ENCODE measurements at regions of chr10 and their contacts with region 1.

Region 1: GRCh38 chr10:28334296-28334695 is 31.4 kb upstream of the MPP7 start:
- DNase-seq: peak in 8 of 9 experiments; percentile 14 to 98 (median 50)
- ATAC-seq: peak; percentile 61
- H3K4me3 ChIP-seq: peak overlapping the region; percentile 60 to 67
- H3K4me3 Mint-ChIP-seq: peak overlapping the region; percentile 95
- H3K27ac ChIP-seq: peak overlapping the region; percentile 96 to 98
- H3K27ac Mint-ChIP-seq: peak overlapping the region; percentile 100
- H3K4me1 ChIP-seq: peaks cover 64% of the 10 kb centered on the region
- H3K4me1 Mint-ChIP-seq: peaks cover 74% of the 10 kb centered on the region
- H3K27me3 ChIP-seq: no peaks in the 10 kb centered on the region
- H3K27me3 Mint-ChIP-seq: no peaks in the 10 kb centered on the region
- CTCF ChIP-seq: no peak

Region 2: GRCh38 chr10:26486991-26487850 is 1847.1 kb before region 1 on chr10:
- CTCF ChIA-PET with region 1: no interaction called
- POLR2A ChIA-PET with region 1: no interaction called
- intact Hi-C with region 1: loop called (anchors 5 to 10 kb)
- DNase-seq: peak; percentile 16 to 92 (median 69)
- ATAC-seq: peak; percentile 75
- H3K4me3 ChIP-seq: peak overlapping the region in 1 of 2 experiments; percentile 2
- H3K4me3 Mint-ChIP-seq: peak overlapping the region; percentile 66
- H3K27ac ChIP-seq: peak overlapping the region; percentile 73 to 91
- H3K27ac Mint-ChIP-seq: peak overlapping the region; percentile 97
- H3K4me1 ChIP-seq: peaks cover 66% of the 10 kb centered on the region
- H3K4me1 Mint-ChIP-seq: peaks cover 71% of the 10 kb centered on the region
- H3K27me3 ChIP-seq: no peaks in the 10 kb centered on the region
- H3K27me3 Mint-ChIP-seq: no peaks in the 10 kb centered on the region
- CTCF ChIP-seq: no peak

Region 3: DNA sequence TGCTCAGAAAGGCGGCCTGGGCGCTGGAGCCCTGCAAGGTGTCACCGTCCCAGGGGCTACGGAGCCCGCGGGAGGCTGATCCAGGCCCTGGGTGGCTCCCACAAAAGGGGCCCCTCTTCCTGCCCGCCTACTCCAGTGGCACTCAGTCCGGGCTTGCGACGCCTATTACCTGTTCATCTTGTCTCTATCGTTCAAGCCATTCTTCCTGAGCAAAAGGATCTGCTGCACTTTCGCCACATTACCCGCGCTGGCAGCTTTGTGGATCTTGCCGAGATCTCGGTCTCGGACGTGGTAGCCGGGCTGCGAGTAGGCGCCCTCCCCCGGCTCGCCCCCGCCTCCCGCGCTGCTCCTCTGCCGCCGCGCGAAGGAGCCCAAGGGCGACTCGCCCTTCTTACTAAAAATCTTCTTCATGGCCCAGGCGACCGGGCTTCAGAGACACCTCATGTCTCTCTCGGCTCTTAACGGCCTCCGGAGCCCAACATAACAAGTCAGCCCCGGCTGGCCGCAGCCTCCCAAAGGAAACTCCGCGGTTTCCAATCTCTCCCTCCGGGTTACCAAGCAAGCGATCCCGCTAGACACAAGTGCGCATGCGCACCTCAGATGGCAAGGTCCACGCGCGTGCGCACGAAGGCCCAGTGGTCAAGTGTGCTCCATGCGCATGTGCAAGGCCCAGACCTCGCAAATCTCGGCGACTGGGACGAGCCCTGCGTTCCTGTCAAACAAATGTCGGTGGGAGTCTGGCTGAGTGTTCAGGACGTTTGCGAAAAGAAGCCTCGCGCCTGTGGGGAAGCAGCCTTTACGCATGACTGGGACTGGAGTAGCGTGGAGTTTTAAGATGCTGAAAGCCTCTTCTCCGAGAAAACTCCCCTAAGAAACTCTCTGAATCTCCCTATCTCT is 1234.1 kb before region 1 on chr10 and contains the start of gene ANKRD26:
- CTCF ChIA-PET with region 1: no interaction called
- POLR2A ChIA-PET with region 1: no interaction called
- intact Hi-C with region 1: loop called (anchors 10 kb)
- DNase-seq: peak; percentile 88 to 99 (median 97)
- ATAC-seq: peak; percentile 53
- H3K4me3 ChIP-seq: peak within 1 kb of the TSS; percentile 84
- H3K4me3 Mint-ChIP-seq: peak within 1 kb of the TSS; percentile 93
- H3K27ac ChIP-seq: peak within 1 kb of the TSS; percentile 70 to 94
- H3K27ac Mint-ChIP-seq: peak within 1 kb of the TSS; percentile 95
- H3K4me1 ChIP-seq: peaks cover 35% of the 10 kb centered on the region
- H3K4me1 Mint-ChIP-seq: peaks cover 51% of the 10 kb centered on the region
- H3K27me3 ChIP-seq: no peaks in the 10 kb centered on the region
- H3K27me3 Mint-ChIP-seq: no peaks in the 10 kb centered on the region
- CTCF ChIP-seq: no peak
- total RNA-seq, gene ANKRD26: 4.0 to 4.7 TPM

Region 4: DNA sequence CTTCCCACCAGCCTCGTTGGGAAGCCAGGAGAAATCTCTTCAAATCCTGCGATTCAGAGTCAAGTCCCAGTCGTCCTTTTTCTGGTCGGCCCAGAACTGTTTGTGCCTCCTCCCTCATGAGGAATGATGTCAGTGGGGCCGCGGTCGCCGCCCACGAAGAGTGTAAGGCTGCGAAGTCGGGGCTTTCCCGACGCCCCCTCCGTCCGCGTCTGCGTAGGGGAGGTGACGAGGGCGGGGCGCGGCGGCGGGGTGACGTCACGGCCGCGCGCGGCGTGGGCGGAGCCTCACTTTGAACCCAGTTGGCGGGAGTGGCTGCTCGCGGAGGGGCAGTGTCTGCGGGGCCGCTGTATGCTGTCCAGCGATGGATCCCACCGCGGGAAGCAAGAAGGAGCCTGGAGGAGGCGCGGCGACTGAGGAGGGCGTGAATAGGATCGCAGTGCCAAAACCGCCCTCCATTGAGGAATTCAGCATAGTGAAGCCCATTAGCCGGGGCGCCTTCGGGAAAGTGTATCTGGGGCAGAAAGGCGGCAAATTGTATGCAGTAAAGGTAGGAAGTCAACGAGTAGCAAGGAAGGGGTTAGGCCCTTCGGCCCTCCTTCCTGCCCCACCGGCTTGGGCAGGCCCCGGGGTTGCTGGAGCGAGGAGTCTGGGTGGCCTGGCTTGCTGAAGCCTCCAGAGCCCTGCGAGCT is 1179.1 kb before region 1 on chr10 and contains the start of gene MASTL:
- CTCF ChIA-PET with region 1: no interaction called
- POLR2A ChIA-PET with region 1: no interaction called
- intact Hi-C with region 1: loop called in 1 of 2 experiments (anchors 2 kb)
- DNase-seq: peak; percentile 90 to 98 (median 93)
- ATAC-seq: peak; percentile 82
- H3K4me3 ChIP-seq: peak within 1 kb of the TSS; percentile 84 to 98
- H3K4me3 Mint-ChIP-seq: peak within 1 kb of the TSS; percentile 99
- H3K27ac ChIP-seq: peak within 1 kb of the TSS; percentile 100
- H3K27ac Mint-ChIP-seq: peak within 1 kb of the TSS; percentile 100
- H3K4me1 ChIP-seq: peaks cover 27% of the 10 kb centered on the region
- H3K4me1 Mint-ChIP-seq: peaks cover 49% of the 10 kb centered on the region
- H3K27me3 ChIP-seq: no peaks in the 10 kb centered on the region
- H3K27me3 Mint-ChIP-seq: no peaks in the 10 kb centered on the region
- CTCF ChIP-seq: no peak
- total RNA-seq, gene MASTL: 33.4 to 33.6 TPM

Region 5: GRCh38 chr10:28317760-28318159 is 16.5 kb before region 1 on chr10:
- CTCF ChIA-PET with region 1: interaction called, 3 read pairs
- POLR2A ChIA-PET with region 1: interaction called, 24 read pairs
- intact Hi-C with region 1: no loop called
- DNase-seq: no peak
- ATAC-seq: no peak
- H3K4me3 ChIP-seq: no peak overlapping the region
- H3K4me3 Mint-ChIP-seq: no peak overlapping the region
- H3K27ac ChIP-seq: no peak overlapping the region
- H3K27ac Mint-ChIP-seq: no peak overlapping the region
- H3K4me1 ChIP-seq: no peaks in the 10 kb centered on the region
- H3K4me1 Mint-ChIP-seq: peaks cover 55% of the 10 kb centered on the region
- H3K27me3 ChIP-seq: no peaks in the 10 kb centered on the region
- H3K27me3 Mint-ChIP-seq: no peaks in the 10 kb centered on the region
- CTCF ChIP-seq: no peak

Region 6: GRCh38 chr10:28367929-28368484 is 33.7 kb after region 1 on chr10:
- CTCF ChIA-PET with region 1: interaction called, 8 read pairs
- POLR2A ChIA-PET with region 1: interaction called, 64 read pairs
- intact Hi-C with region 1: loop called (anchors 1 kb)
- DNase-seq: peak; percentile 14 to 91 (median 68)
- ATAC-seq: peak; percentile 92
- H3K4me3 ChIP-seq: peak overlapping the region in 1 of 2 experiments; percentile 1
- H3K4me3 Mint-ChIP-seq: peak overlapping the region; percentile 74
- H3K27ac ChIP-seq: peak overlapping the region; percentile 51 to 77
- H3K27ac Mint-ChIP-seq: peak overlapping the region; percentile 96
- H3K4me1 ChIP-seq: peaks cover 52% of the 10 kb centered on the region
- H3K4me1 Mint-ChIP-seq: peaks cover 52% of the 10 kb centered on the region
- H3K27me3 ChIP-seq: no peaks in the 10 kb centered on the region
- H3K27me3 Mint-ChIP-seq: no peaks in the 10 kb centered on the region
- CTCF ChIP-seq: no peak

Region 7: DNA sequence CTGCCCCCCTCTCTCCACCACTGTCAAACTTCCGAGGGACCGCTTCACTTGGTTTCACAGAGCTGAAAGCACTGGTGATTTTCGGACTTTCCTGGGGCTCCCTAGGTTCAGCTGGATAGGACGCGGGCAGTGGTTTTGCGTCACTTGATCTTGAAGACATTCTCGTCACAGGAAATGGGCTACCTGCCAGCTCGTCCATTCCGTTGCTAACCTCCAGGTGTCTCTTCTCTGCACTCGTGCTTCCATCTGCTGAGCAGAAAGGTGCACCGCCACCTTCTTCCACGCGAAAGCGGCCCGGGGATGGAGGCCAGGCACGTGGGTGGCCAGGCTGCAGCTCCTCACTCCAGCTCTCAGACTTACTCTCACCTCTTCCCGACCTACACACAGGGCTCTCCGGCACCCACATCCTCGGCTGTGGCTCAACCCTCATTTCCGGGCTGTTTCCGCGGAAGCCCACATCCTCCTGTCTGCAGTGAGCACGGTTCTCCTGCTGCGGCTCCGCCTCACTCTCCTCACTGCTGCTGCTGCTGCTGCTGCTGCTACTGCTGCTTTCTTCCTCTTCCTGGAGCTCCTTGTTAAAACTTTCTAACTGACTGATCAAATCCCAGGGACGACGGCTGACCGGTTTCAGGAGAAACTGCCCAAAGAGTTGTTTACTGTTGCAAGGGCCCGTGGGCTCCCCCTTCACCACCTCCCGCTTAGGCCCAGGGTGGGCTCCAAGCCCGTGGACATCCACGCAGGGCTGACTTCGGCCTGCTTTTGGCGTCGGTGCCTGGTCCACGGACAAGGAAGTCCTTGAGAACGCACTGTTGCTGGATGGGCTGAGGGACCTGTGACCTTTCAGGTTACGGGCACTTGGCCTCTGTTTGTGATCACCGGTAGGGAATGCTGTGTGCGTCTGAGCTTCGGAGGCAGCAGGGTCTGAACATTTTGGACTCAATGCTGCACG is 1693.0 kb after region 1 on chr10:
- CTCF ChIA-PET with region 1: no interaction called
- POLR2A ChIA-PET with region 1: no interaction called
- intact Hi-C with region 1: loop called in 1 of 2 experiments (anchors 10 kb)
- DNase-seq: peak; percentile 79 to 96 (median 85)
- ATAC-seq: peak; percentile 88
- H3K4me3 ChIP-seq: peak overlapping the region; percentile 33 to 53
- H3K4me3 Mint-ChIP-seq: peak overlapping the region; percentile 62
- H3K27ac ChIP-seq: peak overlapping the region in 1 of 2 experiments; percentile 41
- H3K27ac Mint-ChIP-seq: peak overlapping the region; percentile 80
- H3K4me1 ChIP-seq: peaks cover 37% of the 10 kb centered on the region
- H3K4me1 Mint-ChIP-seq: peaks cover 35% of the 10 kb centered on the region
- H3K27me3 ChIP-seq: peaks cover 24 to 34% of the 10 kb centered on the region in 2 experiments
- H3K27me3 Mint-ChIP-seq: peaks cover 55% of the 10 kb centered on the region
- CTCF ChIP-seq: peak; percentile 32

Measured in CD8-positive, alpha-beta T cell (primary cell).